ENCODE measurements at regions of chr1 and their contacts with region 1.

Region 1: GRCh38 chr1:37946703-37947360 is at the start of gene INPP5B:
- DNase-seq: peak; percentile 68
- H3K4me3 Mint-ChIP-seq: peak within 1 kb of the TSS; percentile 98
- H3K27ac Mint-ChIP-seq: peak within 1 kb of the TSS; percentile 97
- H3K4me1 Mint-ChIP-seq: peaks cover 16% of the 10 kb centered on the region
- H3K27me3 Mint-ChIP-seq: no peaks in the 10 kb centered on the region
- total RNA-seq, gene INPP5B: 23.1 and 24.2 TPM in 2 replicates

Region 2: DNA sequence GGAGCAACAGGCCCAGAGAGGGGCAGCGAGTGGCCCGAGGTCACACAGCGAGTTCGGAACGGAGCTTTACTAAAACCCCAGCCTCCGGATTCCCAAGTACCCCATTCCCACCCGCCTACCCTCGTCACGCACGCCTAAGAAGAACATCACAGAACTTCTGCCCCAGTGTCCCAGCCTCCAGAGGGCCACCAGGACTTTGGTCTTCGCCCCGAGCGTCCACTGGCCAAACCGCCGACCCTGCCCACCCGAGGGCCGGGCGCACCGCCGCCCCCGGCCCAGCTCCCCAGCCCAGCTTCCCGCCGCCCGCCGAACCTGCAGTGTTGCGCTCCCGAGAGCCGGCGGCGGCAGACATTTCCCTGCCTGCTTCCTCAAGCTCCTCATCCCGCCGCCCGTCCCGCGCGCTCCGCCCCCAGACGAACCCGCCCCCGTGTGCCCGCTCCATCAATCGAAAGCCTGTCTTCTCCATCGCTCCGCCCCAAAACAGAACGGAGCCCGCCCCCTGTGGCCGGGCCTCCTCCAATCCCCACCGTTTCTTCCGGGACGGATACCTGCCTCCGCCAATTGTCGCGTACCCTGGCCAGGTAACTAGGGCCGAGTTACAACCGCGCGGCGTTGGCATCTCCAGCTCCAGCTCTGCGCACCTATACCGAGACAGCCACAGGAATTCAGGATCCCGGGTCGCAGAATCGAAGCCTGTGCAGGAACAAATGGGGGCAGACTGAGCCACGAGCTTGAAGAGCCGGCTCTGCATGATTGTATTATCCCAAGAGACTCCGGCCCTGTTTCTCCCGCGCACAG is 15.3 kb before region 1 on chr1:
- intact Hi-C with region 1: loop called (anchors 2 kb)
- DNase-seq: peak; percentile 97
- H3K4me3 Mint-ChIP-seq: peak overlapping the region; percentile 89
- H3K27ac Mint-ChIP-seq: peak overlapping the region; percentile 82
- H3K4me1 Mint-ChIP-seq: peaks cover 27% of the 10 kb centered on the region
- H3K27me3 Mint-ChIP-seq: no peaks in the 10 kb centered on the region